ENCODE measurements at regions of chr10 and their contacts with region 1.

Region 1: DNA sequence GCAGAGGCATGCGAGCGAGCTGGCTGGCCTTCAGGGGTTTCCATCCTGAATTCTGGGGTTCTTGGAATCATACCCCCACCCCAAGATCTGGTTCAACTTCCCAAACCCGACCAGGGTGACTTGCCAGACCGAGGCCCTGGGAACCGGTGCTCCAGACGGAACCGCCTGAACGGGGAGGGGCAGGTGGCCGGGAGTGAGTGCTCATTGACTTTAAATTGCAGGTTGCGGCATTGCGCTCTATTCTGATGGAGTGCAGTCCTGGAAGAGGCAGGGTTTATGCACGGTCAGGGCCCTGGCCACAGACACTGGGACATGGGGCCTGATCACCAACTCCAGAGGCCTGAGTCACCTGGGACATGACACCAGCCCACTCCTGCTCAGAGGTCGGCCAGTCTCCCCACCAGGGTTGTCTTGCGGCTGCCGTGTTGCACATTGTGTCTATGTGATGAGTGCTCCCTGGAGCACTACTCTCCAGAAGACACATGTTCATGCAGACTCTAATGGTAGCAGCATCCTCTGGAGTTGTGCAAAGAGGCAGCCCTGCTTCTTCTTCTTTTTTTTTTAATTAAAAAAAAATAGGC is 5.8 kb upstream of the DDIT4 start:
- DNase-seq: no peak

Region 2: DNA sequence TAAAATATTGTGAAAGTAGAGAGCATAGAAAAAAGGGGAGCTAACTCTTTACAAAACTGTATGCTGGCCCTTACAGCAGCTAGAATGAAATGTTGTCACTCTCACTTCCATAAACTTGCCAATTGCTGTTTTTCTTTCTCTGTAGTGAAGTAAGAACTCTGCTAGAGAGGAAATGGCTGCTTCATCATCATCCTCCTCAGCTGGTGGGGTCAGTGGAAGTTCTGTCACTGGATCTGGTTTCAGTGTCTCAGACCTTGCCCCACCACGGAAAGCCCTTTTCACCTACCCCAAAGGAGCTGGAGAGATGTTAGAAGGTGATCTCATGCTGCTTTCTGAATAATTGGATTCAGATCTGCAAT is 44.2 kb before region 1 on chr10:
- intact Hi-C with region 1: loop called in 1 of 2 experiments (anchors 1 kb)
- DNase-seq: no peak